Activated CD8-positive, alpha-beta T cell treated with anti-CD3 and anti-CD28 coated beads, Interleukin-2, amount 10 ng/mL, durations not matched to agents 7 days and 5 days (primary cell): ENCODE measurements at regions of chr11 and their contacts with region 1.

Region 1: DNA sequence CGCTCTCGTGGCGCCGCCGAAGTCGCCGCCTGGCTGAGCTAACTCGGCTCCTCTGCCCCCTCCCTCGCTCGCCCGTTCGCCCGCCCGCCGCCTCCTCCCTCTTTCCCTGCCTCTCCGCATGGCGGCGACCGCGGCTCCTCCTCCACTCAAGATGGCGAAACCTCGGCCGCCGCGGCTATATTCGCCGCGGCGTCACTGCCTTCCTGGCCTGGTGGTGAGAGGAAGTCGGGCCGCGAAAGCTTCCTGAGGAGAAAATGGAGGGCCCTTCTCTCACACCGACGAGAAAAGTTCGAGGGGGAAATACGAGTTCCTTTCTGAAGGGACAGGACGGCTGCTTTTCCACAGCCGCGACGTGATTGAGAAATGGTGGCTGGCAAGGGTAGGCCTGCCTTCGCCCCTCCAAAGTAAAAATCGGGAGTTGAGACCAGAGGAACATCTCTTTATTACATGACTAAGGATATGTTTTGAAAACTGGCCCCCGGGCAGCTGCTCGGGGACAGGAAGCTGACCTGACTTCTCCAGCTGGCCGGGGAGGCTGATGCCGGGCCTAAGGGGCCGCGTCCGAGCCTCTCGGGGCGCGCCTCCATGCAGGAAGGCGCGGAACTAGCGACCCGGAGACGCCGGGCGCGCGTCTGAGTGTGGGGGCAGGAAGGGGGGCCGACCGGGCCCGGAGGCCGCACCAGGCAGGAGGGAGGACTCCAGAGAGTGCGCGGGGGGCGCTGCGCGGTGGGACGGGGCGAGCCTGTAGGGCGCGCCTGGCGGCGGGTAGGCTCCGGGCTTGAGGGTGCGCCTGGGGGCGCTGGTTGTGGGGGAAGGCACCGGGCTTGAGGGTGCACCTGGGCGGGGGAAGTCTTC is at the start of gene DDX6:
- DNase-seq: peak; percentile 94
- ATAC-seq: peak; percentile 61
- H3K4me3 Mint-ChIP-seq: peak within 1 kb of the TSS; percentile 99
- H3K27ac Mint-ChIP-seq: peak within 1 kb of the TSS; percentile 100
- H3K4me1 Mint-ChIP-seq: peaks cover 16% of the 10 kb centered on the region
- H3K27me3 Mint-ChIP-seq: no peaks in the 10 kb centered on the region
- total RNA-seq, gene DDX6: 143 to 152 TPM

Region 2: GRCh38 chr11:118870396-118871345 is 79.3 kb after region 1 on chr11:
- CTCF ChIA-PET with region 1: interaction called, 43 read pairs
- POLR2A ChIA-PET with region 1: interaction called, 156 read pairs
- DNase-seq: no peak
- ATAC-seq: peak; percentile 49
- H3K4me3 Mint-ChIP-seq: peak overlapping the region; percentile 75
- H3K27ac Mint-ChIP-seq: peak overlapping the region; percentile 98
- H3K4me1 Mint-ChIP-seq: peaks cover 54% of the 10 kb centered on the region
- H3K27me3 Mint-ChIP-seq: no peaks in the 10 kb centered on the region

Region 3: GRCh38 chr11:118883368-118884071 is 92.2 kb after region 1 on chr11 and contains the start of gene CXCR5:
- CTCF ChIA-PET with region 1: interaction called, 14 read pairs
- POLR2A ChIA-PET with region 1: interaction called, 52 read pairs
- DNase-seq: no peak
- ATAC-seq: no peak
- H3K4me3 Mint-ChIP-seq: no peak within 1 kb of the TSS
- H3K27ac Mint-ChIP-seq: peak within 1 kb of the TSS; percentile 55
- H3K4me1 Mint-ChIP-seq: peaks cover 46% of the 10 kb centered on the region
- H3K27me3 Mint-ChIP-seq: no peaks in the 10 kb centered on the region
- total RNA-seq, gene CXCR5: 0.08 to 0.18 TPM

Region 4: DNA sequence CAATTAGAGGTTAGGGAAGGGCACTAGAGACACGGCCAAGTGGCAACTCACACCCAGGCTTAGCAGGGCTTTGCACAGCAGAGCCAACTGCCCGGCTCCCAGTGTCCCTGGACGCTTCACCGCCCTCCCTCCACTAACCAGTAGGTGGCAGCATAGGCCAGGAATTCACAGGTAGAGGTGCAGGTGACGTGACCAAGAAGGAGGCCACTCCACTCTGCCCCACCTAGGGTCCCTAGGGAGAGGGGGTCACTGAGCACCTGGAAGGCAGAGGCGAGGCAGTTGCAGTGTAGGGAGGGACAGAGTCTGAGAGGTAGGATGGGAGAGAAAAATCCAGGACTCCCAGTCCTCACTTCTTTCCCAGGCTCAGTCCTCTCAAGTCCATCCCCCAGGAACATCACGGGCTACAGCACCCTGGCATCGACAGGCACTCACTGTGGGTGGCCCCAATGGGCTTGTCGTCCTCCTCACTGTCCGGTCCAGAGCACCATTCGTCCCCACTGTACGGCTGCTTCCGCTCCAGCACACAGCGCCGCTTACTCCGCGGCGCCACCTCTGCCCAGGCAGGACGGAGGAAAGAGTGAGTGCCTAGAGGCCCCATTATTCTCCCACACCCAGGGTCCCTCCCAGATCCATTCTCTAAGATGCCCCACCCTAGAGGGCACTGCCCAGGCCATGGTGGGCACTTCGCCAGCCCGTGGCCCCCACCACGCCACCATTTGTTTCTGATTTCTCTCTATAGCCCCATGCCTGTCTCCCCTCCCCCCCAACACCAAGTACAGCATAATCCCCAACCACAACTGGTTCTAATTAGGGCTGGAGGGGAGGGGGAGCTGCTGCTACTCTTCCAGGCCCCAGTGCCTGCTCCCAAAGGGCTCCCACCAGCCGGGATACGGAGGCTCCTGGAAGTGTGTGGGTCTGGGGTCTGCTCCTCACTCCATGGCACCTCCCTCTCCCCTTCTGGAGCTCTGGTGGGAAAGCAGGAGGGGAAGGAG is 116.0 kb after region 1 on chr11:
- CTCF ChIA-PET with region 1: interaction called, 8 read pairs
- POLR2A ChIA-PET with region 1: interaction called, 46 read pairs
- DNase-seq: peak; percentile 91
- ATAC-seq: peak; percentile 74
- H3K4me3 Mint-ChIP-seq: no peak overlapping the region
- H3K27ac Mint-ChIP-seq: peak overlapping the region; percentile 42
- H3K4me1 Mint-ChIP-seq: peaks cover 47% of the 10 kb centered on the region
- H3K27me3 Mint-ChIP-seq: no peaks in the 10 kb centered on the region

Region 5: DNA sequence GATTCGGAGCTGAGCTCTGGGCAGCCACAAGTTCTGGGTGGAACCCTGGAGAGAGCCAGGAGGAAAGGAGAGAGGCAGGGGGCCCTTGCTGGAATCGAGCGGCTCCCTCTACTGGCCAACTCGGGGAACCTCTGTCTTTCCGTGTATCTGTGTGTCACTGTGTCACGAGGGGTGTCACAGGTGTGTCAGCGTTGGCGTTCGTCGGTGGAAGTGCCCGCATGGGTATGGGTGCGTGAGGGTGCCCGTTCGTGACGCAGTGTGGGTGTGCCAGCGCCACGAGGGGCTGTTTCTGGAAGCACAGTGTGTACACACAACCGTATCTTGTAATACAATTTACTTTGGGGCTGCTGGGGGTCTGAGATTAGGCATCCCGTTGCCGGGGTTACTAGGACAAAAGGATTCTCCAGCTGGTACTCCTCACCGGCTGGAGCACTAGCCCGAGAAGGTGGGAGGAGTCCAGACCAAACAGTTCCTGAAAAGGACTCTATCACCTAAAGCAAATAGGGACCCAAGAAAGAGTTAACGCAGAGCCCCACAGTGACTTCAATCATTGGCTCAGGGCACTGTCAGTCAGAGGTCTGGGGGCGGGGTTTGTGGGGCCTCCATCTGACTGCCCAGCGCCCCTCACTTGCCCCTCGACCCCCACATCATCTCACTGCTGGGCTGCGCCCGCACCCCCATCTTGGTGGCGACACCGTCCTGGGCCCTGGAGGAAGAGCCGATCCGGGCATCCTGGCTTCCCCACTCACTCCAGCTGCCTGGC is 137.0 kb after region 1 on chr11:
- CTCF ChIA-PET with region 1: interaction called, 59 read pairs
- POLR2A ChIA-PET with region 1: interaction called, 19 read pairs
- DNase-seq: peak; percentile 94
- ATAC-seq: peak; percentile 57
- H3K4me3 Mint-ChIP-seq: peak overlapping the region; percentile 98
- H3K27ac Mint-ChIP-seq: peak overlapping the region; percentile 99
- H3K4me1 Mint-ChIP-seq: peaks cover 53% of the 10 kb centered on the region
- H3K27me3 Mint-ChIP-seq: no peaks in the 10 kb centered on the region